Motor neuron (in vitro differentiated cells): ENCODE measurements at regions of chr2 and their contacts with region 1.

Region 1: GRCh38 chr2:71798266-71799012 is 345.1 kb downstream of the DYSF start:
- ATAC-seq: peak in 3 of 8 experiments; percentile 41 to 63 (median 52)
- H3K4me3 ChIP-seq: no peak overlapping the region
- H3K27ac ChIP-seq: no peak overlapping the region
- H3K4me1 ChIP-seq: peaks cover 22 to 29% of the 10 kb centered on the region in 2 donors

Region 2: DNA sequence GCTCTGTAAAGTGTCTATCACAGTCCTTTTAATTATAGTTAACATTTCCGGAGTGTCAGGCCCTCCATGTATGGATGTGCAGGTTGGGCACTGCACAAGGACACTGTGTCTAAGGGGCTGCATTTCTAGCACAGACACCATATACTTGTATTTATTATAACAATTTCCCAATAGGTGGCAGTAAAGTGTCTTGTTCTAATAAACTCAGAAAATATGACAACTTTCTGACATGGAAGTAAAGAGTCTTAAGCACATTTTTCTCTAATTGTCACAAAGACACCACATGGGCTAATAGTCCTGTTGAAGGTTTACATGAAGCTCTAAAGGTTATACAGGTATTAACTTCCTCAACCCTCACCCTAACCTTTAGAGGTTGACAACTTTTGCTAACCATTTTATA is 188.5 kb before region 1 on chr2:
- in situ Hi-C with region 1: loop called in 1 of 9 experiments (anchors 25 kb)
- ATAC-seq: peak in 4 of 8 experiments; percentile 19 to 65 (median 50)
- H3K4me3 ChIP-seq: no peak overlapping the region
- H3K27ac ChIP-seq: no peak overlapping the region
- H3K4me1 ChIP-seq: peaks cover 0 to 13% of the 10 kb centered on the region in 2 donors

Region 3: GRCh38 chr2:71995067-71995665 is 196.7 kb after region 1 on chr2:
- in situ Hi-C with region 1: loop called in 1 of 9 experiments (anchors 10 kb)
- ATAC-seq: peak in 2 of 8 experiments; percentile 52 to 57
- H3K4me3 ChIP-seq: no peak overlapping the region
- H3K27ac ChIP-seq: no peak overlapping the region
- H3K4me1 ChIP-seq: no peaks in the 10 kb centered on the region